Dendritic cell treated with granulocyte-macrophage colony-stimulating factor and Interleukin-4, amounts not matched to agents 40 ng/mL and 50 ng/mL, for 4 days (primary cell): ENCODE measurements at regions of chr7 and their contacts with region 1.

Region 1: DNA sequence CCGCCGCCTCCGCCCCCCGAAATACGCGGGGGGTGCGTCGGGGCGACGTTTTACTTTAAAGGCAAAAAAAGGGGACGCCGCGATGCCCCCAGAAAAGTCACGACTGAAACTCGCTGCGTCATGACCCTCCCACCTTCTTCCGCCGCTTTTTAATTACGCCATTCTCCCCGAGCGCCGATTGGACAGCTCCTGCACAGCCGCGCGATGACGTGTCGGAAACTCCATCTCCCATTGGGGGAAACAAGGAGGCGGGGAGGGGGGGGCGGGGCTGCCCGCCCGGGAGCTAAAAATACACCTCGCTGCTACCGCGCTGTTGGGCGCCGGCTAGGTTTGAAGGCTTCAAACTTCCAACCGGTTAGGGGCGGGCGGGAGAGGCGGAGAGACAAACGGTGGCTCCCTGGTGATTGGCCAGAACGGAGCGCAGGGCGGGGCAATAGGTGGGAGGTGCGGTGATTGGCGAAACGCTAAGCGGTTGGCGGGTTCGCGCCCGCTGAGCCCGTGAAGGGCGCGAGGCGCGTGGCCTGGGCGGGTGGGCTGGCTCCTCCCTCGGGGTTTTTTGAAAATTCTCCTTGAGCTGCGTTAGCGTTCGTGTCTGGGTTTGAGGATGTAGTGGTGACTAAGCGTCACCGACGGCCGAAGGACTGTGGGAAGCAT is at the start of gene RHEB:
- H3K4me3 Mint-ChIP-seq: peak within 1 kb of the TSS; percentile 90
- H3K27ac Mint-ChIP-seq: peak within 1 kb of the TSS; percentile 93
- H3K4me1 Mint-ChIP-seq: peaks cover 48% of the 10 kb centered on the region
- H3K27me3 Mint-ChIP-seq: peaks cover 5% of the 10 kb centered on the region

Region 2: GRCh38 chr7:151484971-151485707 is 34.8 kb before region 1 on chr7:
- intact Hi-C with region 1: loop called (anchors 1 kb)
- H3K4me3 Mint-ChIP-seq: no peak overlapping the region
- H3K27ac Mint-ChIP-seq: peak overlapping the region; percentile 65
- H3K4me1 Mint-ChIP-seq: peaks cover 31% of the 10 kb centered on the region
- H3K27me3 Mint-ChIP-seq: no peaks in the 10 kb centered on the region

Region 3: DNA sequence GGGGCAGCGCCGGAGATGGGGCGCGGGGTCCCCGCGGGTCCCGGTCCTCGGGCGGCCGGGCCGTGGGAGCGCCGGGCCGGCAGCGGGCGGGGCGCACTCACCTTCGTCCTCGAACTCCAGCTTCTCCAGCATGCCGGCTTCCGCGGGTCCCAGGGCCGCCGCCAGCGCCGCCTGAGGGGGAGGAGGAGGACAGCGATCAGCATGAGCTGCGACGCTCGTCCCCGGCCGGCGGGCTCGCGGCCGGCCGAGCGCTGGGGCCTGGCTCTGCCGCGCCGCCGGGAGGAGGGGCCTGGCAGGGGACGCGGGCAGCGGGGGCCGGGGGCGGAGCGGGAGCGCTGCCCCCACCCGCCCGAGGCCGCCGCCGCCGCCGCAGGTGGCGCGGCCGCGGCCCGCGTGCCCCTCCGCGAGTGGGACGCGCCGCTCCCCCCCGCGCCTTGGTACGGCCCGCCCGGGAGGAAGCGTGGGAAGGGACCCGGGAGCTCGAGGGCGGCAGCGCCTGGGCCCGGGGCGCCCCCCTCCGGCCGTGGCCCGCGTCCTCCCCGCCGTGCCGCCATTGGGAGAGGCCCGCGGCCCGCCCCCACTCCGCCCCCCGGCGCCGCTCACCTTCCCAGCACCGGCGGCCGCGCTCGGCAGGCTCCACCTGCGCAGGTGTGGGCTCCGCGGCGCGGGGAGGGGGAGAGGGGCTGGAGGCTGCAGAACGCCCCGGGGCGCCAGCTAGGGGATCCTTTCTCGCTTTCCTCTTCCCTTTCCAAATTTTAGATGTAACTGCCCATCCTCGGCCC is 112.3 kb after region 1 on chr7:
- intact Hi-C with region 1: loop called (anchors 5 kb)
- H3K4me3 Mint-ChIP-seq: peak overlapping the region; percentile 97
- H3K27ac Mint-ChIP-seq: peak overlapping the region; percentile 99
- H3K4me1 Mint-ChIP-seq: peaks cover 22% of the 10 kb centered on the region
- H3K27me3 Mint-ChIP-seq: no peaks in the 10 kb centered on the region

Region 4: GRCh38 chr7:152025077-152025936 is 505.4 kb after region 1 on chr7 and contains the start of gene GALNT11:
- intact Hi-C with region 1: loop called (anchors 10 kb)
- H3K4me3 Mint-ChIP-seq: peak within 1 kb of the TSS; percentile 84
- H3K27ac Mint-ChIP-seq: peak within 1 kb of the TSS; percentile 90
- H3K4me1 Mint-ChIP-seq: peaks cover 17% of the 10 kb centered on the region
- H3K27me3 Mint-ChIP-seq: peaks cover 7% of the 10 kb centered on the region